B cell (primary cell): ENCODE measurements at regions of chr13 and their contacts with region 1.

Region 1: GRCh38 chr13:53260594-53260993 is 232.0 kb downstream of the OLFM4 start:
- DNase-seq: no peak
- ATAC-seq: no peak
- H3K4me3 ChIP-seq: no peak overlapping the region
- H3K4me3 Mint-ChIP-seq: no peak overlapping the region
- H3K27ac ChIP-seq: no peak overlapping the region
- H3K27ac Mint-ChIP-seq: no peak overlapping the region
- H3K4me1 ChIP-seq: no peaks in the 10 kb centered on the region
- H3K4me1 Mint-ChIP-seq: no peaks in the 10 kb centered on the region
- H3K27me3 ChIP-seq: no peaks in the 10 kb centered on the region
- H3K27me3 Mint-ChIP-seq: no peaks in the 10 kb centered on the region
- CTCF ChIP-seq: no peak

Region 2: GRCh38 chr13:53250266-53250875 is 10.2 kb before region 1 on chr13:
- CTCF ChIA-PET with region 1: interaction called, 26 read pairs
- POLR2A ChIA-PET with region 1: no interaction called
- intact Hi-C with region 1: no loop called
- DNase-seq: peak; percentile 44
- ATAC-seq: no peak
- H3K4me3 ChIP-seq: no peak overlapping the region
- H3K4me3 Mint-ChIP-seq: no peak overlapping the region
- H3K27ac ChIP-seq: no peak overlapping the region
- H3K27ac Mint-ChIP-seq: no peak overlapping the region
- H3K4me1 ChIP-seq: no peaks in the 10 kb centered on the region
- H3K4me1 Mint-ChIP-seq: no peaks in the 10 kb centered on the region
- H3K27me3 ChIP-seq: no peaks in the 10 kb centered on the region
- H3K27me3 Mint-ChIP-seq: no peaks in the 10 kb centered on the region
- CTCF ChIP-seq: peak; percentile 95